Endothelial cell of umbilical vein (primary cell): ENCODE measurements at regions of chr3 and their contacts with region 1.

Region 1: DNA sequence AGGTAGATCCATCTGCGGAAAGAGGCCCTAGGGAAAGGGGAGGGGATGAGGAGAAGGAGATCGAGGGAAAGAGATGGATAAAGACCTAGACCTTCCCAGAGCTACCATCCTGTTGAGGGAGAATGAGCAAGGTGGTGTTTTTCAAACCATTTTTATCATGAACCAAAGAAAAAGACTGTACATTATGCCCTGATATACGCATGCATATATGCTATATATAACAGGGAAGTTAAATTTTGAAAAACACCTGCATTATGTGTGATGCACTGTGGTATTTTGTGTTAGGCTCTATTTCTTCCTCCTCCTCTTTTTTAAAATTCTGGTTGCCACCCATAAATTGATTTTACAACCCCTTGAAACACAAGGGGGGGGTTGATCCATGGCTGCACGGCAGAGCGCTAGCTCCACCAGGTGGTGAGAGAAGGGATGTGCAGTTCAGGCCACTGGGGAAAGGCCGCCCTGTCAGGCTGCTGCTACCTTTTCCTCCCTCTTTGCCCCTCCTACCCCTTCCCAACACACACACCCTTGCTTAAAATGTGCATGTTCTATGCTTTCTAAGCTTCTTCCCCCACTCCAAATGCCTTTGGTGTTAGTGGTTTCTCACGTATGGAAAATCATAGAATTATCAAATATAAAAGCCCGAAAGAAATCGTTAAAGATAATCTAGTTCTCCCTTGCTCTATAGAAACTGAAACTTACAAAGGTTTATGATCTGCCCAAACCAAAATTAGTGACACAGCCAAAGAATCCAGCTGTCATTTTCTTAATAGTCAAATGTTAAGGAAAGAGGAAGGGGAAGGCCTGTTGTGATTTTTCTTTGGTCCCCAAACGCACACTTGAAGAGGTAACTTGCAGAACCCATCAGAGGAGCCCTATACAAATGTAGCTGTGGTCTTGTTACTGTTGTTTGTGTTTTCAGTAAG is 262.0 kb upstream of the UMPS start:
- DNase-seq: peak; percentile 58
- H3K4me3 ChIP-seq: no peak overlapping the region
- H3K27ac ChIP-seq: no peak overlapping the region
- H3K4me1 ChIP-seq: no peaks in the 10 kb centered on the region
- H3K27me3 ChIP-seq: peaks cover 0 to 2% of the 10 kb centered on the region in 2 experiments
- CTCF ChIP-seq: peak; percentile 91 to 97
- POLR2A ChIP-seq: no peak

Region 2: GRCh38 chr3:124014366-124014942 is 453.8 kb before region 1 on chr3:
- CTCF ChIA-PET with region 1: interaction called, 19 read pairs
- POLR2A ChIA-PET with region 1: no interaction called
- dilution Hi-C with region 1: no loop called
- intact Hi-C with region 1: loop called (anchors 1 kb)
- DNase-seq: peak; percentile 23
- H3K4me3 ChIP-seq: no peak overlapping the region
- H3K27ac ChIP-seq: no peak overlapping the region
- H3K4me1 ChIP-seq: peaks cover 7% of the 10 kb centered on the region
- H3K27me3 ChIP-seq: peaks cover 0 to 5% of the 10 kb centered on the region in 2 experiments
- CTCF ChIP-seq: no peak
- POLR2A ChIP-seq: no peak